HepG2 (cell line): ENCODE measurements at regions of chr2 and their contacts with region 1.

Region 1: GRCh38 chr2:203650860-203651613 is 55.4 kb upstream of the CD28 start:
- DNase-seq: peak; percentile 98
- ATAC-seq: peak; percentile 89
- H3K4me3 ChIP-seq: peak overlapping the region; percentile 24 to 59 (median 35); a peak in 5 of 6 replicates
- H3K27ac ChIP-seq: peak overlapping the region; percentile 91
- H3K4me1 ChIP-seq: peaks cover 73% of the 10 kb centered on the region
- H3K27me3 ChIP-seq: no peaks in the 10 kb centered on the region
- CTCF ChIP-seq: peak; percentile 78
- EP300 ChIP-seq: peak in 1 of 2 experiments; percentile 90; a peak in 2 of 4 replicates
- POLR2A ChIP-seq: peak in 1 of 2 experiments; percentile 62; a peak in 2 of 4 replicates
- RAD21 ChIP-seq: peak; percentile 59; the same call in 1 of the 2 replicates

Region 2: DNA sequence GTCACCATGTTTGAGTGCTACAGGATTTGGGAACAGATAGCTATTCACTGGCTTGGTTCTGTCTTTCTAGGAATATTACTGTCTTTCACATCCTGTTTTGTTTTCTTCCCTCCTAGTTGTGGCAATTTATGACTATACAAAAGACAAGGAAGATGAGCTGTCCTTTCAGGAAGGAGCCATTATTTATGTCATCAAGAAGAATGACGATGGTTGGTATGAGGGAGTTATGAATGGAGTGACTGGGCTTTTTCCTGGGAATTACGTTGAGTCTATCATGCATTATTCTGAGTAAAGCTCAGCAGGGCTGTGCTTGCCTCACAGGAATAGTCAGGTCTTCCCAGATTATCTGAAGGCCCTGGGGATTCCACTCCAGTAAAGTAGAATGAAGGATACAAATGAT is 224.0 kb before region 1 on chr2:
- CTCF ChIA-PET with region 1: no interaction called
- POLR2A ChIA-PET with region 1: no interaction called
- in situ Hi-C with region 1: no loop called
- intact Hi-C with region 1: no loop called
- DNase-seq: no peak
- ATAC-seq: no peak
- H3K4me3 ChIP-seq: no peak overlapping the region
- H3K27ac ChIP-seq: no peak overlapping the region
- H3K4me1 ChIP-seq: no peaks in the 10 kb centered on the region
- H3K27me3 ChIP-seq: no peaks in the 10 kb centered on the region
- CTCF ChIP-seq: no peak
- EP300 ChIP-seq: no peak
- POLR2A ChIP-seq: no peak
- RAD21 ChIP-seq: no peak

Region 3: GRCh38 chr2:203470371-203470770 is 180.7 kb before region 1 on chr2:
- CTCF ChIA-PET with region 1: no interaction called
- POLR2A ChIA-PET with region 1: no interaction called
- in situ Hi-C with region 1: loop called (anchors 10 kb)
- intact Hi-C with region 1: no loop called
- DNase-seq: no peak
- ATAC-seq: no peak
- H3K4me3 ChIP-seq: no peak overlapping the region
- H3K27ac ChIP-seq: no peak overlapping the region
- H3K4me1 ChIP-seq: no peaks in the 10 kb centered on the region
- H3K27me3 ChIP-seq: no peaks in the 10 kb centered on the region
- CTCF ChIP-seq: no peak
- EP300 ChIP-seq: no peak
- POLR2A ChIP-seq: no peak
- RAD21 ChIP-seq: no peak

Region 4: DNA sequence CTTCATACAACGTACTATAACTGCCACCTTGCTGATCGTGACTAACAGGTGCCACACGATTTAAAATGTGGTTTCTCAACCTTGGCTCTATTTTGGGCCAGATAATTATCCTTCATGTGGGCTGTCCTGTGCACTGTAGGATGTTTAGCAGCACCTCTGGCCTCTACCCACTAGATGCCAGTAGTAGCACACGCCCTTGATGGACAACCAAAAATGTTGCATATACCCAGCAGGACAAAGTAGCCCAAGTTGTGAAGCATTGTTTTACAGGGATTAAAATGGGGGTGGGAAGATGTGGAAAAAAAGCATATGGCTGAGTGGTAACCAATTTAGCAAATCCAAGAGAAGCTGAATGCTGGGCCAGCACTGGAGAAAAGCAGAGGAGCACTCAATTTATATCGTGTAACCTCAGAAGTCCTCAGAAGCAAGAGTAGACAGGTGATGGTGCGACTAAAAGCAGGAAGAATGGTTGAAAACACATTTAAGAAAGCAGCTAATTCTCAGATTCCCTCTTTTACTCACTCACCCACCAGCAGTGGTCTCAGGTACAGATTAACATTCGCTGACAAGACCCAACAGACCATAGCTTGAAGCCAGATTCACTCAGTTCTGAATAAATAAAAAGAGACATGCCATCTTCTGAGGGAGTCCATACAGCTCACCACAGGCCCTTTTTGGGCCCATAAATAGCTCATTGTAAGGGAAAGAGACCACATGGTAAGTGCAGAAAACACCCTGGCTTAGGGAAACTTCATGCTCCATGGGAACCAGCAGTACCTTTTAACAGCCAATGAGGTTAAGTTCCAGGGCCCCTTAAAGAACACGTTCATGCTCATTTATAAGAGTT is 166.5 kb before region 1 on chr2:
- CTCF ChIA-PET with region 1: interaction called, 3 read pairs
- POLR2A ChIA-PET with region 1: no interaction called
- in situ Hi-C with region 1: loop called (anchors 10 kb)
- intact Hi-C with region 1: loop called (anchors 2 kb)
- DNase-seq: peak; percentile 46
- ATAC-seq: peak; percentile 94
- H3K4me3 ChIP-seq: no peak overlapping the region
- H3K27ac ChIP-seq: no peak overlapping the region
- H3K4me1 ChIP-seq: 0 out of 2 replicates have a peak, but pooled peaks cover under 1% of the 10 kb centered on the region
- H3K27me3 ChIP-seq: no peaks in the 10 kb centered on the region
- CTCF ChIP-seq: peak; percentile 77
- EP300 ChIP-seq: no peak
- POLR2A ChIP-seq: no peak
- RAD21 ChIP-seq: peak; percentile 83

Region 5: GRCh38 chr2:203535078-203535783 is 115.8 kb before region 1 on chr2 and contains the start of gene RAPH1:
- CTCF ChIA-PET with region 1: no interaction called
- POLR2A ChIA-PET with region 1: interaction called, 5 read pairs
- in situ Hi-C with region 1: no loop called
- intact Hi-C with region 1: loop called (anchors 2 kb)
- DNase-seq: peak; percentile 75
- ATAC-seq: peak; percentile 92
- H3K4me3 ChIP-seq: peak within 1 kb of the TSS; percentile 97 to 99 (median 97)
- H3K27ac ChIP-seq: peak within 1 kb of the TSS; percentile 85
- H3K4me1 ChIP-seq: peaks cover 30% of the 10 kb centered on the region
- H3K27me3 ChIP-seq: no peaks in the 10 kb centered on the region; a peak in 1 of 5 replicates
- CTCF ChIP-seq: peak; percentile 12; the same call in 1 of the 2 replicates
- EP300 ChIP-seq: no peak; a peak in 1 of 4 replicates
- POLR2A ChIP-seq: peak; percentile 70 to 79
- RAD21 ChIP-seq: peak; percentile 43
- total RNA-seq, gene RAPH1: 6.7 and 17.9 TPM in 2 replicates

Region 6: GRCh38 chr2:203673933-203674332 is 22.9 kb after region 1 on chr2:
- CTCF ChIA-PET with region 1: no interaction called
- POLR2A ChIA-PET with region 1: no interaction called
- in situ Hi-C with region 1: no loop called
- intact Hi-C with region 1: no loop called
- DNase-seq: no peak
- ATAC-seq: no peak
- H3K4me3 ChIP-seq: no peak overlapping the region
- H3K27ac ChIP-seq: no peak overlapping the region
- H3K4me1 ChIP-seq: no peaks in the 10 kb centered on the region
- H3K27me3 ChIP-seq: no peaks in the 10 kb centered on the region
- CTCF ChIP-seq: no peak
- EP300 ChIP-seq: no peak
- POLR2A ChIP-seq: no peak
- RAD21 ChIP-seq: no peak

Region 7: GRCh38 chr2:203718087-203718486 is 67.0 kb after region 1 on chr2:
- CTCF ChIA-PET with region 1: no interaction called
- POLR2A ChIA-PET with region 1: no interaction called
- in situ Hi-C with region 1: no loop called
- intact Hi-C with region 1: no loop called
- DNase-seq: no peak
- ATAC-seq: no peak
- H3K4me3 ChIP-seq: no peak overlapping the region
- H3K27ac ChIP-seq: no peak overlapping the region
- H3K4me1 ChIP-seq: peaks cover 41% of the 10 kb centered on the region
- H3K27me3 ChIP-seq: peaks cover 0 to 7% of the 10 kb centered on the region in 2 experiments; a peak in 1 of 5 replicates
- CTCF ChIP-seq: no peak
- EP300 ChIP-seq: no peak
- POLR2A ChIP-seq: no peak
- RAD21 ChIP-seq: no peak